ENCODE measurements at regions of chr17 and their contacts with region 1.

Region 1: DNA sequence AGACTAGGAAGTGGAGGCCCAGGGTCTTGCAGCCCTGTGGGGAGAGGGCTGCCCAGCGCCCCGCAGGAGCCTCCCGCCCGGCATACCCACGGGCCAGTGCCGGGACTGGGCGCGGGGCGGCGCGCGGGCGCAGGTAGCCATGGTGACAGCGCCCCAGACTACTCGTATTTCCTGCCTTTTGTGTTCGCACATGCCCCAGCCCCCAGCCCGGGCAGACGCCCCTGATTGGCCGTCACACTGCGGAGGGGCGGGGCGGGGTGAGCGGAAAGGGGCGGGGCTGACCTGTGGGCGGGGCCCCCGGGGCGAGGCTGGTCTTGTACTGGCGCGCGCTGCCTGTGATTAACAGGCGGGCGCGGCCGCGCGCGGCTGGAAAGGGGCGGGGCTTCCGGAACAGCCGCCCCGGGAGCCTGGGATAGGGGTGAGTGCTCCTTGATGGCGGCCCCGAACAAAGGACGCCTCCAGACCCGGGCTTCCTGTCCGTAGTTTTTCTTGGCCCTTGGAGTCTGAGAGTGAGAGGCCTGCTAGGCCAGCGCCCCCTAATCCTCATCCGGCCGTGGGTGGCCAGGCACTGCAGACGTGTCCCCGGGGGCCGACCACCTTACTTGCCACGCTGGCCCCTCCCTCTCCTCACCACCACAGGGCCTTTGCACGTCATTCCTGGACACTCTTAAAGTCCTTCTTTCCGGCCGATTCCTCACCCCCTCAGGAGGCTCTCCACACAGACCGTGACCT is 71.0 kb downstream of the RAI1 start:
- DNase-seq: peak; percentile 95 to 98 (median 97)
- ATAC-seq: peak; percentile 84
- H3K4me3 ChIP-seq: peak overlapping the region; percentile 68 to 75
- H3K4me3 Mint-ChIP-seq: peak overlapping the region; percentile 90
- H3K27ac ChIP-seq: peak overlapping the region; percentile 94 to 96
- H3K27ac Mint-ChIP-seq: peak overlapping the region; percentile 99
- H3K4me1 ChIP-seq: peaks cover 79% of the 10 kb centered on the region
- H3K4me1 Mint-ChIP-seq: peaks cover 82% of the 10 kb centered on the region
- H3K27me3 ChIP-seq: no peaks in the 10 kb centered on the region
- H3K27me3 Mint-ChIP-seq: no peaks in the 10 kb centered on the region
- CTCF ChIP-seq: no peak

Region 2: GRCh38 chr17:17591355-17592298 is 160.6 kb before region 1 on chr17 and contains the start of gene PEMT:
- CTCF ChIA-PET with region 1: no interaction called
- POLR2A ChIA-PET with region 1: no interaction called
- intact Hi-C with region 1: loop called in 1 of 2 experiments (anchors 1 kb)
- DNase-seq: peak; percentile 81 to 98 (median 92)
- ATAC-seq: peak; percentile 90
- H3K4me3 ChIP-seq: peak within 1 kb of the TSS; percentile 72 to 88
- H3K4me3 Mint-ChIP-seq: peak within 1 kb of the TSS; percentile 94
- H3K27ac ChIP-seq: peak within 1 kb of the TSS; percentile 80 to 86
- H3K27ac Mint-ChIP-seq: peak within 1 kb of the TSS; percentile 95
- H3K4me1 ChIP-seq: peaks cover 20% of the 10 kb centered on the region
- H3K4me1 Mint-ChIP-seq: peaks cover 19% of the 10 kb centered on the region
- H3K27me3 ChIP-seq: no peaks in the 10 kb centered on the region
- H3K27me3 Mint-ChIP-seq: no peaks in the 10 kb centered on the region
- CTCF ChIP-seq: no peak
- total RNA-seq, gene PEMT: 14.7 to 15.4 TPM

Region 3: GRCh38 chr17:17694169-17695081 is 57.8 kb before region 1 on chr17:
- CTCF ChIA-PET with region 1: no interaction called
- POLR2A ChIA-PET with region 1: interaction called, 6 read pairs
- intact Hi-C with region 1: loop called (anchors 1 kb)
- DNase-seq: peak; percentile 25 to 87 (median 76)
- ATAC-seq: peak; percentile 72
- H3K4me3 ChIP-seq: peak overlapping the region; percentile 83 to 91
- H3K4me3 Mint-ChIP-seq: peak overlapping the region; percentile 86
- H3K27ac ChIP-seq: peak overlapping the region; percentile 88 to 97
- H3K27ac Mint-ChIP-seq: peak overlapping the region; percentile 99
- H3K4me1 ChIP-seq: peaks cover 52% of the 10 kb centered on the region
- H3K4me1 Mint-ChIP-seq: peaks cover 68% of the 10 kb centered on the region
- H3K27me3 ChIP-seq: no peaks in the 10 kb centered on the region
- H3K27me3 Mint-ChIP-seq: no peaks in the 10 kb centered on the region
- CTCF ChIP-seq: no peak

Region 4: DNA sequence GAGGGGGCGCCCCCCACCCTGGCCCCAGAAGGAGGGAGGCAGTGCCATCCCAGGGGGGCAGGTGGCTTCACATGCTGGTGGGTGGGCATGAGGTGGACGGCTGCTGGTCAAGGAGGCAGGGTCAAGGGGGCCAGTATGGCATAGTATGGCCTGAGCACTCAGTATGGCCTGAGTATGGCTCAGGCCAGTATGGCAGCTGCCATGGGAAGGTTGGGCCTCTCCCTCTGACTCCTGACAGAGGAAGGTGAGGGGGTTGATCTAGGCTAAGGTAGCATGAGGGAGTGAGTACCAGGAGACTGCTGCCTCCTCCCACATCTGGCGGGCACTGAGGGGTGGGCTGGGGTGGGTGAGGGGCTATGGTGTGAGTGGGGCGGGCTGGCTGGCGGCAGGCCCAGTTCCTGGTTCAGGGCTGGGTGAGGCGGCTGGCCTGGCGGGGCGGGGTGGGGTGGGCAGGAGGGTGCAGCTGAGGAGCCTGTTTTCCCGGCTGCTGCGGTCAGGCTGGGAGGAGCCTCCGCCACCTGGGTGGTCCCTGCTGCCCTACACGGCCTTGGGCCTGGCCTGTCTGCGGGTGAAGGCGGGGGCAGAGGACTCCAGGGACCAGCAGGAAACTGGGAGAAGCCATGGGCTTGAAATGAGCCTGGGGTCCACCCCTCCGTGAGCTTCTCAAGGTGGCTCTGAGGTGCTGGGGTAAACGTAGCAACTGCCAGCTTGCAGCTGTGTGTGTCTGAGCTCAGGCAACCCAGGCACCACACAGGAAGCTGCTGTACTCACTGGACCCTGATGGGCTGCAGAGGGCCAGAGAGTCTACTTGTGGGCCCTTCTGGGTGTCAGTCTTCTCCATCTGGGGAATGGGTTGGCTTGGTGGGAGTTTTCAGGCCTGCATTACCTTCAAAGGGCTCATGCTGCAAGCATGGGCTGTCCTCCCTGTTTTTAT is 14.0 kb before region 1 on chr17:
- CTCF ChIA-PET with region 1: interaction called, 3 read pairs
- POLR2A ChIA-PET with region 1: interaction called, 4 read pairs
- intact Hi-C with region 1: loop called (anchors 1 to 2 kb)
- DNase-seq: peak in 2 of 9 experiments; percentile 30 to 65
- ATAC-seq: peak; percentile 38
- H3K4me3 ChIP-seq: no peak overlapping the region
- H3K4me3 Mint-ChIP-seq: peak overlapping the region; percentile 8
- H3K27ac ChIP-seq: peak overlapping the region in 1 of 2 experiments; percentile 33
- H3K27ac Mint-ChIP-seq: peak overlapping the region; percentile 73
- H3K4me1 ChIP-seq: peaks cover 58% of the 10 kb centered on the region
- H3K4me1 Mint-ChIP-seq: peaks cover 43% of the 10 kb centered on the region
- H3K27me3 ChIP-seq: no peaks in the 10 kb centered on the region
- H3K27me3 Mint-ChIP-seq: no peaks in the 10 kb centered on the region
- CTCF ChIP-seq: no peak

Region 5: DNA sequence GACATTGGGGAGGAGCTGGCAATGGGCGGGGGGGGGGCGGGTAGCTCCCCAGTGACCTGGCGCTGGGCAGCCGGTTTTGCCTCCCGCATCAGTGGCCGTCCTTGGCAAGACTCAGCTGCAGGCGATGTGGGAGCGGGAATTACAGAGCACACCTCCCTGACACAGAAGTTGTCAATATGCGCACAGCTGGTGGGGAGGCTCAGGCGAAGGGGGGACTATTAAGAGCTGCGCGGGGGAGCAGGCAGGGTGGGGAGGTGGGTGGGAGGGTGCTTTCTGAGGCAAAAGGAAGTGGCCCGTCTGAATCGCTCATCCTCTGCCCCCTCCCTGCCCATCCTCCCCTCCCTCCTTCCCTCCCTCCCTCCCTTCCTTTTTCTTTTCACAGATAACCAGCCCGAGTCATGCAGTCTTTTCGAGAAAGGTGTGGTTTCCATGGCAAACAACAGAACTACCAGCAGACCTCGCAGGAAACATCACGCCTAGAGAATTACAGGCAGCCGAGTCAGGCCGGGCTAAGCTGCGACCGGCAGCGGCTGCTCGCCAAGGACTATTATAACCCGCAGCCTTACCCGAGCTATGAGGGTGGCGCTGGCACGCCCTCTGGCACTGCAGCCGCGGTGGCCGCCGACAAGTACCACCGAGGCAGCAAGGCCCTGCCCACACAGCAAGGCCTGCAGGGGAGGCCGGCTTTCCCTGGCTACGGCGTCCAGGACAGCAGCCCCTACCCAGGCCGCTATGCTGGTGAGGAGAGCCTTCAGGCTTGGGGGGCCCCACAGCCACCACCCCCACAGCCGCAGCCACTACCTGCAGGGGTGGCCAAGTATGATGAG is 40.5 kb after region 1 on chr17:
- CTCF ChIA-PET with region 1: no interaction called
- POLR2A ChIA-PET with region 1: interaction called, 3 read pairs
- intact Hi-C with region 1: loop called (anchors 1 to 2 kb)
- DNase-seq: peak; percentile 39 to 94 (median 68)
- ATAC-seq: peak; percentile 91
- H3K4me3 ChIP-seq: peak overlapping the region; percentile 16 to 24
- H3K4me3 Mint-ChIP-seq: peak overlapping the region; percentile 66
- H3K27ac ChIP-seq: peak overlapping the region; percentile 65 to 76
- H3K27ac Mint-ChIP-seq: peak overlapping the region; percentile 82
- H3K4me1 ChIP-seq: peaks cover 23% of the 10 kb centered on the region
- H3K4me1 Mint-ChIP-seq: peaks cover 32% of the 10 kb centered on the region
- H3K27me3 ChIP-seq: no peaks in the 10 kb centered on the region
- H3K27me3 Mint-ChIP-seq: no peaks in the 10 kb centered on the region
- CTCF ChIP-seq: no peak

Region 6: GRCh38 chr17:17836250-17836817 is 84.1 kb after region 1 on chr17:
- CTCF ChIA-PET with region 1: no interaction called
- POLR2A ChIA-PET with region 1: interaction called, 3 read pairs
- intact Hi-C with region 1: loop called (anchors 1 to 2 kb)
- DNase-seq: peak; percentile 94 to 99 (median 97)
- ATAC-seq: peak; percentile 72
- H3K4me3 ChIP-seq: peak overlapping the region; percentile 87 to 95
- H3K4me3 Mint-ChIP-seq: peak overlapping the region; percentile 88
- H3K27ac ChIP-seq: peak overlapping the region; percentile 99
- H3K27ac Mint-ChIP-seq: peak overlapping the region; percentile 97
- H3K4me1 ChIP-seq: peaks cover 82% of the 10 kb centered on the region
- H3K4me1 Mint-ChIP-seq: peaks cover 75% of the 10 kb centered on the region
- H3K27me3 ChIP-seq: no peaks in the 10 kb centered on the region
- H3K27me3 Mint-ChIP-seq: no peaks in the 10 kb centered on the region
- CTCF ChIP-seq: no peak

Region 7: GRCh38 chr17:18038861-18039534 is 286.7 kb after region 1 on chr17 and contains the starts of genes ATPAF2 and GID4:
- CTCF ChIA-PET with region 1: no interaction called
- POLR2A ChIA-PET with region 1: no interaction called
- intact Hi-C with region 1: loop called (anchors 1 to 5 kb)
- DNase-seq: peak; percentile 99 to 100 (median 100)
- ATAC-seq: peak; percentile 90
- H3K4me3 ChIP-seq: peak within 1 kb of the TSS; percentile 85 to 92
- H3K4me3 Mint-ChIP-seq: peak within 1 kb of the TSS; percentile 92
- H3K27ac ChIP-seq: peak within 1 kb of the TSS; percentile 63 to 84
- H3K27ac Mint-ChIP-seq: peak within 1 kb of the TSS; percentile 91
- H3K4me1 ChIP-seq: peaks cover 34% of the 10 kb centered on the region
- H3K4me1 Mint-ChIP-seq: peaks cover 56% of the 10 kb centered on the region
- H3K27me3 ChIP-seq: no peaks in the 10 kb centered on the region
- H3K27me3 Mint-ChIP-seq: no peaks in the 10 kb centered on the region
- CTCF ChIP-seq: no peak
- total RNA-seq, gene ATPAF2: 16.8 to 24.5 TPM
- total RNA-seq, gene GID4: 2.7 to 5.0 TPM

Measured in CD8-positive, alpha-beta T cell (primary cell).